ENCODE measurements at regions of chr9 and their contacts with region 1.

Region 1: DNA sequence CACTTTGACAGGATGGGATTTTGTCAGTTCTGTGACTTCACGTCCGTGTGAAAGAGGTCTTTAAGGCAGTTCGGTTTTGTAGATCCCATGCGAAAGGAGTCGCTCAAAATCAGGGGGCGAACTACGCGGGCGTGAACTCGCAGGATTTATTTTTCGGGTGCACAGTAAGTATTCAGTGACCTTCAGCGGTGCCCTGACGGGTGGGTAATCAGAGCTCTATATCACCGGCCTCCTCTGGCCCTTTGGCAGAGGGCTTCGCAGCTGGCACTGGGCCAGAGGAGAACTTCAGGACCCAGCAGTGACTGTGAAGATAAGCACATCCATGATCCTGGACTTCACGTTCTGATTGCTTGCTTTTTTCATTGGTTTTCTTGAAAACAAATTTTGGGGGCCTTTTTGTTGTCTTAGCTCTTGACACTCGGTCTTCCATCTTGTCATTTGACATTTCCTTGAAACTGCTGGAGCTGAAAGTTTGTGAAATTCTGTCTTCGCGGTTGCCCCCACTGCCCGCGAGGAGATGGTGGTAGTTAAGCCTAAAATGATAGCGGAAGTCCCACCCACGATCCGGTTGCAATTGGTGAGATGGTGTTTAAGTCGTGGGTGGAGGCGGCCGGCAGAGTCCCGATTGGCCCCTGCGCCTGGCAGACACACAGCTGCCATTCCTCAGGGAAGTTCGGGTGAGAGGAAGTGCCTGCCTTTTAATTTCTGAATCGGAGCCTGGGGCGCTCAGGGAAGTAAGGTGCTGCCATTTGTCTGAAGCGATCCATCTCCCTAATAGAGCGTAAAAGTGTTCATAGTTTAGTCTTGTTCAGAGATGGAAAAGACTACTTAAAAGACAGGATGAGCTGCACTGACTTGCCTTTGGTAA is at the start of gene FAM120AOS:
- DNase-seq: peak; percentile 87 to 95
- ATAC-seq: peak; percentile 83 to 95 (median 90)
- H3K4me3 ChIP-seq: peak within 1 kb of the TSS; percentile 74 to 99 (median 90)
- H3K27ac ChIP-seq: peak within 1 kb of the TSS; percentile 87 to 99 (median 96)
- H3K4me1 ChIP-seq: peaks cover 8 to 71% (median 55%) of the 10 kb centered on the region in 9 donors
- H3K27me3 ChIP-seq: no peaks in the 10 kb centered on the region
- CTCF ChIP-seq: no peak
- total RNA-seq, gene FAM120AOS: 28.8 to 39.9 (median 33.2) TPM

Region 2: DNA sequence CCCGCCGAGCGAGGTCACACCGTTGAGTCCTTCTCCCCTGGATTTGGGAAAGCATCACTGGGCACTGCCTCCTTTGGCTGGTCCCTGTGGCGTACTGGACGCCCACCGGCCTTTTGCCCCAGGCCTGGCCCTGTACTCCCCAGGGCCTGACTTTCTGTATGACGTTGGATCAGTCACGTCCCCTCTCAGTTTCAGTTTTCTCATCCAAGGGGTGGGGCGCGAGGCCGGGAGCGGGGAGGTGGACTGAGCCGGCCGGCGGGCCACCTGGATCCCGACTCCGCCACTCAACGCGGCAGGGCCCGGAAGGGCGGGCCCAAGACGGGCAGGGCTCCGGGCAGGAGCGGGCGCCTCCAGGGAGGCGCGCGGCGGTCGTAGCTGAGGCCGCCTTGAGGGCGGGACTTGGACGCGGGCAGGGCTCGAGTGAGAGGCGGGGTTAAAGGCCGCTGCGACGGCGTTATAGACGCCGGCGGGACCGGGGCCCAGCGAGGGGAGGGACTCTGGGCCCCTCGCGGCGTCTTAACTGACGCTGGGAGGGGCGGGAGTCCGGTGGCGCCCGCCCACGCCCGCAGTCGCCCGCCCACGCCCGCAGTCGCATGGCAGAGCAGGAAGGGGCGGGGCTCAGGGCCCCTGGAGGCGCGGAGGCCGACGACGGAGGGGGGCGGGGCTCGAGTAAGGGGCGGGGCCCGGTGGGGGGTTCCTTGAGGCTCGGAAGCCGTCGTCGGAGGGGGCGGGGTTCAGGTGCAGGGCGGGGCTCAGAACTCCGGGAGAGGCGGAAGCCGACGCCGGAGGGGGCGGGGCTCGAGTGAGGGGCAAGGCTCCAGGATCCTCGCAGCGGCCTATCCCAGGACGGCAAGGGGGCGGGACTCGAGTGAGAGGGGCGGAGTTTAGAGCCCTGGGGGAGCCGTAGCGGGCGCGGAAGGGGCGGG is 357.8 kb before region 1 on chr9:
- intact Hi-C with region 1: loop called in 1 of 10 experiments (anchors 5 kb)
- DNase-seq: peak; percentile 100
- ATAC-seq: peak; percentile 85 to 94 (median 90)
- H3K4me3 ChIP-seq: peak overlapping the region; percentile 4 to 100 (median 97)
- H3K27ac ChIP-seq: peak overlapping the region; percentile 91 to 99 (median 96)
- H3K4me1 ChIP-seq: peaks cover 18 to 71% (median 59%) of the 10 kb centered on the region in 9 donors
- H3K27me3 ChIP-seq: no peaks in the 10 kb centered on the region
- CTCF ChIP-seq: no peak

Region 3: GRCh38 chr9:93501406-93501805 is 48.1 kb after region 1 on chr9:
- intact Hi-C with region 1: loop called in 7 of 10 experiments (anchors 5 to 10 kb)
- DNase-seq: no peak
- ATAC-seq: peak in 5 of 8 donors; percentile 38 to 62 (median 43)
- H3K4me3 ChIP-seq: peak overlapping the region in 9 of 10 donors; percentile 0 to 52 (median 45)
- H3K27ac ChIP-seq: peak overlapping the region in 9 of 10 donors; percentile 3 to 76 (median 63)
- H3K4me1 ChIP-seq: peaks cover 0 to 52% (median 24%) of the 10 kb centered on the region in 9 donors
- H3K27me3 ChIP-seq: no peaks in the 10 kb centered on the region
- CTCF ChIP-seq: no peak

Region 4: GRCh38 chr9:93536874-93537273 is 83.6 kb after region 1 on chr9:
- intact Hi-C with region 1: loop called in 4 of 10 experiments (anchors 5 to 10 kb)
- DNase-seq: no peak
- ATAC-seq: peak in 5 of 8 donors; percentile 40 to 70 (median 52)
- H3K4me3 ChIP-seq: no peak overlapping the region
- H3K27ac ChIP-seq: peak overlapping the region in 4 of 10 donors; percentile 6 to 60 (median 48)
- H3K4me1 ChIP-seq: peaks cover 0 to 36% (median 19%) of the 10 kb centered on the region in 9 donors
- H3K27me3 ChIP-seq: no peaks in the 10 kb centered on the region
- CTCF ChIP-seq: peak in 5 of 9 donors; percentile 9 to 32 (median 27)

Region 5: DNA sequence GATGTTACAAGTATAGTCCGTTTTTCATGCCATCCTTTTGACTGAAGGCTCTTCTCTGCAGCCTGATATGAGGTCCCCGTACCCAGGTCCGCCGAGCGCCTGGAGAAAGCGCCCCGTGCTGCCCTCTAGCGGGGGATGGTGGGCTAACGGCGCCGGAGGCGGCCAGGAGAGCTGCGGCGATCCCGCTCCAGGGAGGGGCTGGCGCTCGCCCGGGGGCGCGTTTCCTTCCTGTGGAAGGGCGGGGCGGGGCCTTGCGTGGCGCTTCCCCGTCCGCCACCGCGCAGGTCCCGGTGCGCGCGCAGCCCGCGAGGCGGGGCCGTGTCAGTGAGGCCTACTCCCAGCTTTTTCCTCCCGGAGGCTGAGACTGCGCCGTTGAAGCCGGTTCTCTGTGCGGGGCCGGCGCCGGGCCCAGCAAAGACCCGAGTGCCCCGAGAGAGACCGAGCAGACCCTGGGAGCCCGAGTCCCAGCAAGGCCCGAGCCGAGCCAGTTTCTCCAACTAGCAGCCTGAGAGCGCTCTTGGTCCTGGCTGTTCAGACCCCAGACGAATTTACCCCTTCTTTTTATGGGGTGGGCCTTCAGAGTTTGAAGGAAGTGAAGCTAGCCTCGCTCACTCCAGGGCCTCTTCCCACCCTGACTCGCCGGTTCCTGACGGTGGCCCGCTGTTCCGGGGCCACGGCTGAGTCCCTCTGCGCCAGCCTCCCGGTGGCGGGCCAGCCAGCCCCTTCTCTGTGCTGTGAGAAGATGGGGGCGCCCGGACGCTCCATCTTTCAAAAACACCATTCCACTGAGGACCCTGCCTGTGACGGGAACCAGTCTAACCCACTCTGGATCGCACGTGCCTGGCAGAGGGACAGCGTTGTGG is 113.4 kb after region 1 on chr9:
- intact Hi-C with region 1: loop called in 8 of 10 experiments (anchors 1 to 10 kb)
- DNase-seq: peak; percentile 98 to 99
- ATAC-seq: peak; percentile 98 to 99 (median 99)
- H3K4me3 ChIP-seq: peak overlapping the region; percentile 31 to 76 (median 64)
- H3K27ac ChIP-seq: peak overlapping the region; percentile 83 to 99 (median 94)
- H3K4me1 ChIP-seq: peaks cover 4 to 27% (median 14%) of the 10 kb centered on the region in 9 donors
- H3K27me3 ChIP-seq: no peaks in the 10 kb centered on the region
- CTCF ChIP-seq: peak; percentile 93 to 100 (median 98)